ENCODE measurements at regions of chr13 and their contacts with region 1.

Region 1: GRCh38 chr13:78572459-78572858 is 30.9 kb downstream of the POU4F1 start:
- DNase-seq: no peak
- ATAC-seq: no peak
- H3K4me3 ChIP-seq: no peak overlapping the region
- H3K27ac ChIP-seq: no peak overlapping the region
- H3K4me1 ChIP-seq: no peaks in the 10 kb centered on the region
- H3K27me3 ChIP-seq: peaks cover 0 to 34% (median 6%) of the 10 kb centered on the region in 7 donors
- CTCF ChIP-seq: no peak

Region 2: DNA sequence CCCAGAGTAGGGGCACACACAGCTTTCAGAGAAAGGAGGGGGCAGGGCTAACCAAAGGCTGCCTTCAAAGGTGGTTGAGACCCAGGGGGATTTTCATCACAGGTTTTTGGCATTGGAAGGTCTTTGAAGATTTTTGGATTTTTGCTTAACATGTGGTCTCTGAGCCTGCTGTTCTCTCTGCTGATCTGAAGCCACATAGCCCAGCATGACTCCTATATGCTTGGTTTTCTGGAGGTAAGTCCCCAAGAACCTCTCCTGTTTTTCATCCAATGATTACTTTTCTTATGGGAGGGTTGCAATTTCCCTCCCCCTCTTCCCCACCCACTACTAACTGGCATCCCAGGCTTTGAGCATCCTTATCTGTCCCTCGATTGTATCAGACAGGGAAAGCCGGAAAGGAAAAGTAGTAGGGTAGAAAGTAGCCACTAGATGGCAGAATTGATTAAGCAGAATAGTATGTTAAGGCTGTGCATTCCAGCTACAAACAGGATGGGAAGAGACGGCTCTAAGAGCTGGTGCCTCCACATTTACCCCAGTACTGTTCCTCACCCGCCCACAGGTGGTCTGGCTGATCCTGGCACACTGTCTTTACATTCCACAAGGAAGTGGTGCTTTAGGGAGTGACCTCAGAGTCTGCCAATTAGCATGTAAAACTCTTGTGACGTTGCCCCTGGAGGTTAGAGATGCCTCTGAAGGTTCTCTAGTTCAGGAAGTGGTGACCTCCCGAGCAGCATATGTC is 434.9 kb before region 1 on chr13:
- intact Hi-C with region 1: loop called in 1 of 10 experiments (anchors 5 kb)
- DNase-seq: no peak
- ATAC-seq: peak; percentile 49 to 85 (median 72)
- H3K4me3 ChIP-seq: no peak overlapping the region
- H3K27ac ChIP-seq: no peak overlapping the region
- H3K4me1 ChIP-seq: peaks cover 0 to 6% (median 0%) of the 10 kb centered on the region in 9 donors
- H3K27me3 ChIP-seq: peaks cover 0 to 3% (median 0%) of the 10 kb centered on the region in 7 donors
- CTCF ChIP-seq: peak; percentile 46 to 79 (median 69)

Region 3: GRCh38 chr13:78409172-78409571 is 163.3 kb before region 1 on chr13:
- intact Hi-C with region 1: no loop called
- DNase-seq: no peak
- ATAC-seq: no peak
- H3K4me3 ChIP-seq: no peak overlapping the region
- H3K27ac ChIP-seq: no peak overlapping the region
- H3K4me1 ChIP-seq: no peaks in the 10 kb centered on the region
- H3K27me3 ChIP-seq: peaks cover 0 to 6% (median 0%) of the 10 kb centered on the region in 7 donors
- CTCF ChIP-seq: no peak

Region 4: DNA sequence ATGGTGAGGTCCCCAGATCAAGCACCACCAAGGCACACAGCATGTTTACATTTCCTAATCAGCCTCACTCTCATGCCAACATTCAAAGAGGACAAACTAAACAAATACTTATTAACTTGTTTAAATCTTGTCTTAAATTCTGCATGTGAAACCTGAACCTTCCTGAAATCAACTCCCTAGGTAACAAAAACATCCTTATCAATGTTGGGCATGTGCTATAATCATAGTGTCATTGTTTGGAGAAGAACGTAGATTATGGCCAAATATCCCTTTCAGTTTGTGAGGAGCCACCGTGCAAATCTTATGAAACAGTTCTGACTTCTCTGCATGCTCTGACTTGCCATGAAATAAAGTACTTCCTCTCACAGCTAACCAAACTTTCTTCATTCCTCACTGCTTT is 1032.3 kb after region 1 on chr13:
- intact Hi-C with region 1: no loop called
- DNase-seq: no peak
- ATAC-seq: no peak
- H3K4me3 ChIP-seq: no peak overlapping the region
- H3K27ac ChIP-seq: no peak overlapping the region
- H3K4me1 ChIP-seq: no peaks in the 10 kb centered on the region
- H3K27me3 ChIP-seq: no peaks in the 10 kb centered on the region
- CTCF ChIP-seq: no peak

Measured in heart right ventricle (tissue), 16 donors.